T-cell (primary cell): ENCODE measurements at regions of chr2 and their contacts with region 1.

Region 1: GRCh38 chr2:200483729-200484198 is 26.1 kb downstream of the KCTD18 start:
- DNase-seq: peak in 1 of 35 experiments; percentile 10
- ATAC-seq: no peak
- H3K4me3 ChIP-seq: no peak overlapping the region
- H3K4me3 Mint-ChIP-seq: no peak overlapping the region
- H3K27ac ChIP-seq: no peak overlapping the region
- H3K27ac Mint-ChIP-seq: no peak overlapping the region
- H3K4me1 ChIP-seq: peaks cover 0 to 5% of the 10 kb centered on the region in 2 experiments
- H3K4me1 Mint-ChIP-seq: peaks cover 0 to 8% (median 2%) of the 10 kb centered on the region in 3 donors
- H3K27me3 ChIP-seq: no peaks in the 10 kb centered on the region
- H3K27me3 Mint-ChIP-seq: peaks cover 0 to 4% of the 10 kb centered on the region in 2 donors

Region 2: GRCh38 chr2:199979832-199980628 is 503.7 kb before region 1 on chr2:
- CTCF ChIA-PET with region 1: interaction called, 12 to 25 read pairs
- POLR2A ChIA-PET with region 1: interaction called, 3 to 8 read pairs
- DNase-seq: peak; percentile 38 to 85 (median 76)
- ATAC-seq: peak; percentile 42 to 76 (median 60)
- H3K4me3 ChIP-seq: no peak overlapping the region
- H3K4me3 Mint-ChIP-seq: no peak overlapping the region
- H3K27ac ChIP-seq: no peak overlapping the region
- H3K27ac Mint-ChIP-seq: no peak overlapping the region
- H3K4me1 ChIP-seq: peaks cover 0 to 4% of the 10 kb centered on the region in 2 experiments
- H3K4me1 Mint-ChIP-seq: peaks cover 0 to 5% (median 4%) of the 10 kb centered on the region in 3 donors
- H3K27me3 ChIP-seq: peaks cover 0 to 5% of the 10 kb centered on the region in 2 experiments
- H3K27me3 Mint-ChIP-seq: no peaks in the 10 kb centered on the region

Region 3: DNA sequence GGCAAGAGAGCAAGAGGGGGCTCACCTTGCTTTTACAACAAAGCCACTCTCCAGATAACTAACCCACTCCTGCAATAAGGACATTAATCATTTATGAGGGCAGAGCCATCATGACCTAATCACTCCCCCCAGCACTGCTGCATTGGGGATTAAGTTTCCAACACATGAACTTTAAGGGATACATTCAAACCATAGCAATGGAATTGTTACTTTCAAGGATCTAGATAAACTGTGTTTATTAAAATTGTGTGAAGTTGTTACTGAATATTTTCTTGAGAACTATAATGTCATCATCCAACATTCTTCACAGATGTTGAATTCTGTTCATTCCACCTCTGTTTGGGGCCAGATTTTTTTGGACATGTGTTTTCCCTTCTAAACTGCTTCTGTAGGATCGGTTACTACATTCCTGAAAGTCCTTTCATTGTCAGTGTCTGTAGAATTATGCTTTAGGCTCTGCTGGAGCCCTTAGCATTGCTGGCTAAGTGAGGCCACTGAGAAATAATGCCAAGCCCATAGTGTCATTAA is 126.8 kb before region 1 on chr2:
- CTCF ChIA-PET with region 1: interaction called in 1 of 2 experiments, 12 read pairs
- POLR2A ChIA-PET with region 1: no interaction called
- DNase-seq: no peak
- ATAC-seq: no peak
- H3K4me3 ChIP-seq: no peak overlapping the region
- H3K4me3 Mint-ChIP-seq: no peak overlapping the region
- H3K27ac ChIP-seq: no peak overlapping the region
- H3K27ac Mint-ChIP-seq: no peak overlapping the region
- H3K4me1 ChIP-seq: no peaks in the 10 kb centered on the region
- H3K4me1 Mint-ChIP-seq: no peaks in the 10 kb centered on the region
- H3K27me3 ChIP-seq: no peaks in the 10 kb centered on the region
- H3K27me3 Mint-ChIP-seq: no peaks in the 10 kb centered on the region

Region 4: GRCh38 chr2:200471324-200471848 is 12.4 kb before region 1 on chr2:
- CTCF ChIA-PET with region 1: interaction called, 8 to 14 read pairs
- POLR2A ChIA-PET with region 1: interaction called, 3 read pairs
- DNase-seq: peak in 19 of 35 experiments; percentile 8 to 67 (median 21)
- ATAC-seq: no peak
- H3K4me3 ChIP-seq: no peak overlapping the region
- H3K4me3 Mint-ChIP-seq: peak overlapping the region in 1 of 3 donors; percentile 3
- H3K27ac ChIP-seq: no peak overlapping the region
- H3K27ac Mint-ChIP-seq: peak overlapping the region in 1 of 2 donors; percentile 76
- H3K4me1 ChIP-seq: peaks cover 18 to 19% of the 10 kb centered on the region in 2 experiments
- H3K4me1 Mint-ChIP-seq: peaks cover 38 to 39% (median 38%) of the 10 kb centered on the region in 3 donors
- H3K27me3 ChIP-seq: no peaks in the 10 kb centered on the region
- H3K27me3 Mint-ChIP-seq: no peaks in the 10 kb centered on the region

Region 5: DNA sequence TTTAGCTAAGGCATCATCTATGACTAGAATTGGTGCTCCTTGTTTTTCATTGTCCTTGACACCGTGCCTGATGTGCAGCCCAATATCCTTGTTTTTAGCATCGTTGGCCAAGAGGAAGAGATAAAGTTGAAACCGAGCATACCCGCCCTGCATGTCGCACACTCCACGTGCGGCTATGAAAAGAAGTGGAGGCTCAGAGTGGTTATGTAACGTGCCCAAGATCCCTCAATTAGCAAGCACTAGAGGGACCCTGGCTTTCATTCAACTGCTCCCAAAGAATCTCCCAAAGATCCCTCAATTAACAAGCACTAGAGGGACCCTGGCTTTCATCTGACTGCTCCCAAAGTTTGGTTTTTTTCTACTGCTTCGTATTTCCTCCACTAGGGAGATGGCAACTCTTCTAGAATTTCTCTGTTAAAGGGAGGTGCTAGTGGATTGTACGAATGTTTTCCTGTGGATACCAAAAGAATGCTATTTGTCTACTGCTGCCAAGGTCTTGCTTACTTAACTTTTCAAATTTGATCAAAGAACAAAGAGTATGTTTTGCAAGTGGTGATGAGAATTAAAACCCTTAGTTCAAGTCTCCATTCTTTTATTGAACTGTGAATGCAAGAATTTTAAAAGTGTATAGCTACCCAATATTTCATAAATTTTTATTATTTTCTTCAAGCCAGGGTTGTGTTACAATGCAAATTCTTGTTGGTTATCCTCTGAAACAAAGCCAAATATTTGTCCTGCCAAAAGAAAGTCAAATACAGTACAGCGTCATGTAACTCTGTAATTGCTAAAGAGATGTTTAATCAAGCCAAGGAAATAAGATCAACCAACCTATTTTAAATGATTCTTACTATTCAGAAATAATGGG is 194.2 kb after region 1 on chr2:
- CTCF ChIA-PET with region 1: no interaction called
- POLR2A ChIA-PET with region 1: no interaction called
- DNase-seq: no peak
- ATAC-seq: no peak
- H3K4me3 ChIP-seq: no peak overlapping the region
- H3K4me3 Mint-ChIP-seq: no peak overlapping the region
- H3K27ac ChIP-seq: no peak overlapping the region
- H3K27ac Mint-ChIP-seq: no peak overlapping the region
- H3K4me1 ChIP-seq: peaks cover 0 to 4% of the 10 kb centered on the region in 2 experiments
- H3K4me1 Mint-ChIP-seq: peaks cover 4 to 11% (median 6%) of the 10 kb centered on the region in 3 donors
- H3K27me3 ChIP-seq: no peaks in the 10 kb centered on the region
- H3K27me3 Mint-ChIP-seq: peaks cover 0 to 11% of the 10 kb centered on the region in 2 donors

Region 6: DNA sequence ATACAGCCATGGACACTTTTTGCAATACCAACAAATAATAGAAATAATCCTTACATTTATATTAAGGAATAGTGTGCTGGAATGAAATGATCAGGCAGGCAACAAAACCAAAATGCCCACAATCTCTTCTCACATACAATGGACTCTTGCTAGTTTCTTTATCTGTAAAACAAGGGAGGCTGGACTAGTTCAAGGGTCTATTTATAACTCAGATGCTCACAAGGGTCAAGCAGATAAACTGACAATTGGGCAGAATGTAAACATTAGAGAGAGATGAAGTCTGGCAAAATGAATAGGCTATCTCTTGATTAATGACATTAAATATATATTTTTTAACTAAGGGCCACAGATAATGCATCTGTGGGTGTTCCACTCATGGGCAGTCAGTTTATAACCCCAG is 393.7 kb after region 1 on chr2:
- CTCF ChIA-PET with region 1: no interaction called
- POLR2A ChIA-PET with region 1: no interaction called
- DNase-seq: no peak
- ATAC-seq: no peak
- H3K4me3 ChIP-seq: no peak overlapping the region
- H3K4me3 Mint-ChIP-seq: no peak overlapping the region
- H3K27ac ChIP-seq: no peak overlapping the region
- H3K27ac Mint-ChIP-seq: no peak overlapping the region
- H3K4me1 ChIP-seq: no peaks in the 10 kb centered on the region
- H3K4me1 Mint-ChIP-seq: peaks cover 0 to 8% (median 3%) of the 10 kb centered on the region in 3 donors
- H3K27me3 ChIP-seq: no peaks in the 10 kb centered on the region
- H3K27me3 Mint-ChIP-seq: no peaks in the 10 kb centered on the region

Region 7: GRCh38 chr2:201182650-201183364 is 699.0 kb after region 1 on chr2 and contains the start of gene CASP10:
- CTCF ChIA-PET with region 1: no interaction called
- POLR2A ChIA-PET with region 1: no interaction called
- DNase-seq: peak in 12 of 35 experiments; percentile 3 to 85 (median 23)
- ATAC-seq: peak; percentile 79 to 93 (median 88)
- H3K4me3 ChIP-seq: peak within 1 kb of the TSS; percentile 56 to 91
- H3K4me3 Mint-ChIP-seq: peak within 1 kb of the TSS; percentile 90 to 99 (median 95)
- H3K27ac ChIP-seq: peak within 1 kb of the TSS; percentile 48
- H3K27ac Mint-ChIP-seq: peak within 1 kb of the TSS; percentile 96
- H3K4me1 ChIP-seq: peaks cover 24 to 32% of the 10 kb centered on the region in 2 experiments
- H3K4me1 Mint-ChIP-seq: peaks cover 46 to 52% (median 48%) of the 10 kb centered on the region in 3 donors
- H3K27me3 ChIP-seq: no peaks in the 10 kb centered on the region
- H3K27me3 Mint-ChIP-seq: no peaks in the 10 kb centered on the region
- total RNA-seq, gene CASP10: 23.3 to 46.4 (median 29.2) TPM